ENCODE measurements at regions of chr18 and their contacts with region 1.

Region 1: DNA sequence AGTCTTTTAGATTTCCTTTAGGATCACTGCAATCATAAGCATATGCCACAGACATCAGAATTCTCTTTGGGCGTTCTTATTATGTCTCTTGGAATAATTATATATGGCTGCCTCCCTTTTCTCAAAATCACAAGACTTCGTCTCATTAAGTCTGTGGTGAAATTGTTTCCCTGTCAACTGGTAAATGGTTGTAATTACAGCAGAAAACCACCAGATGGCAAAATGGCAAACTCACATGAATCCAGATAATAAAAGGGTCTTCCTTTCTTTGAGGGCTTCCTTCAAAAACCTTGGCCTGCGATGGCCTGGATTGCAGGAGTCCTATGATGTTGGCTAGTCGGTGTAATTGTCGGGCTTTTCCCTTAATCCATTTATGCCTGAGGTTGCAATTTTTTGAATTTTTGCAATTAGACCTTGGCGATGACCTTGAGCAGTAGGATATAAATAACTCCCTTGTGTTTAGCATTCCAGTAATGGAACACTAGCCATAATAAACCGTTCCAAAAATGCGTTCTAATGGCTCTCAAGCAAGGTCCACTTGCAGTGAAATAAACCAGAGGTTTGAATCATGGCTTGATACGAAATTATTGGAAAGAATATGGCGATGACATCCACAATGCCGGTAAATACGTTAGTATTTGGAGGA is 656.4 kb downstream of the MBD2 start:
- DNase-seq: peak; percentile 29
- H3K4me3 ChIP-seq: no peak overlapping the region
- H3K27ac ChIP-seq: no peak overlapping the region
- H3K4me1 ChIP-seq: no peaks in the 10 kb centered on the region
- H3K27me3 ChIP-seq: no peaks in the 10 kb centered on the region
- CTCF ChIP-seq: peak; percentile 16 to 36
- POLR2A ChIP-seq: no peak

Region 2: DNA sequence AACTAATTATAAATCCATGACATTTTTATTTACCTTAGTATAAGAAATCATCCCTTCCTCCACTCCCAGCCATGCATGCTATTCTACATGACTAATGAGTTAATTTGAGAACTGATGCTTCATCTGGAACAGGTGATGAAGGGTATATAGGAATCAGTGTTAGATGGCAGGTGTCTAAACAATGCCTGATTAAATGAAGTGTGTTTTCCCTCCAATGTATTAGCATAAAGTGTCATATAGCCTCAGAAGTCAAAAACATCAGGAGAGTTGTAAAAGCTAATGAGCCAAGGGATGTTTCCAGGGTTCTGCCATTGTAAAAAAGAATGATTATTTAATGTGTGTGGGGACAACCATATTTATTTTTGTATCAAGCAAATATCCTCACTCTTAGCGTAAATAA is 314.3 kb before region 1 on chr18:
- CTCF ChIA-PET with region 1: no interaction called
- POLR2A ChIA-PET with region 1: no interaction called
- dilution Hi-C with region 1: no loop called
- intact Hi-C with region 1: no loop called
- DNase-seq: no peak
- H3K4me3 ChIP-seq: no peak overlapping the region
- H3K27ac ChIP-seq: no peak overlapping the region
- H3K4me1 ChIP-seq: no peaks in the 10 kb centered on the region
- H3K27me3 ChIP-seq: no peaks in the 10 kb centered on the region
- CTCF ChIP-seq: no peak
- POLR2A ChIP-seq: no peak

Region 3: DNA sequence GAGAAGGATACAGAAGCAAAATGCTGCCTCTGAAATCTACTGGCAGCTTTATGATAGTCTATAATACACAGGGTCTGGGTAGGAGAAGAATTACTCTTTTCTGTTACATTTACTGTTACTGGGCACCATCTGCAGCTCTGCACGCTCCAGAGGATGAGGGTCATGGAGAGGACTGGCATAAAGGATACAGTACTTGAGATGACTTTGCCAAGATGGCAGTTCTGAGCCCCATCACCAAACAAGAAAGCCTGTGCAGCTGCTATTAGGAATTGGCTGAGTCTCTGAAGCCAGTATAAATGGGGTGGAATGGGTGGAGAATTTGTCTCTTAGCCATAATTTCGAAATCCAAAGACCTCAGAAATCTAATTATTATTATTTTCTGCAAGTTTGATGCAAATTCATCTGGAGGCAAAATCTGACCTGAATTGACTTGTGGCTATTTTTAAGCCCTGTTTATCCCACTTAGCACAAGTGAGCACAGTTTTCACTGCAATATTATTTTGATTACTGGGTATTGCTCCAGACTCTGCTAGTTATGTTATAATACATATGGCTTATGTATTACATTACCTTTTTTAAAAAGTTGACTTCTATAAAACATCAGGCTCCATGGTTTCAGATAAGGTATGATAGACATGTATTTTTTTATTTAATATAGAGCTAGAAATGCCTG is 76.9 kb after region 1 on chr18:
- CTCF ChIA-PET with region 1: no interaction called
- POLR2A ChIA-PET with region 1: no interaction called
- dilution Hi-C with region 1: no loop called
- intact Hi-C with region 1: no loop called
- DNase-seq: no peak
- H3K4me3 ChIP-seq: no peak overlapping the region
- H3K27ac ChIP-seq: no peak overlapping the region
- H3K4me1 ChIP-seq: no peaks in the 10 kb centered on the region
- H3K27me3 ChIP-seq: no peaks in the 10 kb centered on the region
- CTCF ChIP-seq: no peak
- POLR2A ChIP-seq: no peak

Region 4: DNA sequence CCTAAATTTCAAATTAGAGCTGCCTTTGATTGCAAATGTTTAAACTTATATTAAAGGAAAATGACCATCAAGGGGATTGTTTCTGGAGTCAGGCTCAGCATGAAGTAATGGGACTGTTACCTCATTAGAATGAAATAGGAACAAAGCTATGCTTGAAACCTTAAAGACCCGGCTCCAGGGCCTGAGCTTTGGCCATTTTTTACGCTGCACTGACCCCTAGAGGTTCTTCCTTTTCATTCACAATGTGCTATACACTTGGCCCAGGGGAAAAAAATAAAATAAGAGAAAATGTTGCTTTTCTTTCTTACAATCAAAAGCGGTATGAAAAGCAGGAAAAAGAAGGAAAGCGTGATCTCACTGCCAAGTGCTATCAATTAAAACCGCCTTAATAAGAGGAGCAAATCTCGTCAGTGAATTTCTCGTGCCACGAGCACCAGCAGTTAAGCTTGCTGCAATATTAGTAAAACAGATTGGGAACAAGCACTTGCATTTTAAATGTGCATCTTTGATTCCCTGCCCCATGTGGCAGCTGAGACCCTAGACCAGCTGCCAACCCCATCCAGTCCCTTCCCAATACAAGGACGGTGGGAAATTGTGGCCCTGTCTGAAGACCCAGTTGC is 559.8 kb after region 1 on chr18:
- CTCF ChIA-PET with region 1: interaction called, 16 read pairs
- POLR2A ChIA-PET with region 1: no interaction called
- dilution Hi-C with region 1: no loop called
- intact Hi-C with region 1: loop called (anchors 2 kb)
- DNase-seq: peak; percentile 60
- H3K4me3 ChIP-seq: no peak overlapping the region
- H3K27ac ChIP-seq: no peak overlapping the region
- H3K4me1 ChIP-seq: peaks cover 2% of the 10 kb centered on the region
- H3K27me3 ChIP-seq: no peaks in the 10 kb centered on the region
- CTCF ChIP-seq: peak; percentile 55 to 62
- POLR2A ChIP-seq: no peak

Measured in endothelial cell of umbilical vein (primary cell).